ENCODE measurements at regions of chr3 and their contacts with region 1.

Region 1: GRCh38 chr3:185552358-185552877 is at the start of gene LIPH:
- DNase-seq: no peak
- ATAC-seq: peak; percentile 70
- H3K4me3 ChIP-seq: peak within 1 kb of the TSS in 2 of 3 experiments; percentile 4 to 26; a peak in 3 of 6 replicates
- H3K27ac ChIP-seq: no peak within 1 kb of the TSS
- H3K4me1 ChIP-seq: peaks cover 31% of the 10 kb centered on the region
- H3K27me3 ChIP-seq: no peaks in the 10 kb centered on the region; a peak in 1 of 5 replicates
- CTCF ChIP-seq: no peak
- EP300 ChIP-seq: no peak
- POLR2A ChIP-seq: no peak
- RAD21 ChIP-seq: no peak
- total RNA-seq, gene LIPH: 0.09 TPM in 1 of 2 replicates, not detected in the other

Region 2: DNA sequence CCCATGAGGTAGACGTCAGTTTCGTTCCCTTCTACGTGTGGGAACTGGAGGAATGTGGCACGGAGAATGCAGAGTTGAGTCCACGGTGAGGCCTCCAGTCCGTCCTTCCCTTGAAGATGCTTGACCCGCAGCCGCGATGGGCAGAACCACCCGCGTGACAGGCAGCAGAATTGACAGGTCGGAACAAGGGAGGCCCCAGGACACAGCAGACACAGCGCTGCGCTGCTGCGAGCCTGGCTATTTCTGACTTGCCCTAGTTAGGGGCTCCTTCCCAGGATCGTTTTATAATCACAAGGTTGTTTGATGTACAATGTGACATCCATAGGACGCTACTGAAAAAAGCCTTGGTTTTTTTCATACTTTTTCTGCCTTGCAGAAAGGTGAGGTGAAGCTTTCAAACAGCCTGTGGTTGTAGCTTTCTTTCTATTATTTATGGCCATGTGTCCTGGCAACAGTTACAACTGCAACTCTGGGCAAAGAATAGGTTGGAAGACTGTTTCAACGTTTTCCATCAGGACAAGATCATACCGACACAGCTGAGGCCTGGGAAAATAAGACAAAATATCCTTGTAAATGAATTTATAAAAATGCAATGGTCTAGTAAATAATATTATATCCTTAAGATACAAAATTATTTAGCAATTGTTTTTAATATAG is 44.0 kb before region 1 on chr3:
- CTCF ChIA-PET with region 1: no interaction called
- POLR2A ChIA-PET with region 1: no interaction called
- in situ Hi-C with region 1: no loop called
- intact Hi-C with region 1: loop called (anchors 10 kb)
- DNase-seq: no peak
- ATAC-seq: peak; percentile 27; the same call in 2 of the 3 replicates
- H3K4me3 ChIP-seq: no peak overlapping the region
- H3K27ac ChIP-seq: no peak overlapping the region
- H3K4me1 ChIP-seq: peaks cover 6% of the 10 kb centered on the region
- H3K27me3 ChIP-seq: no peaks in the 10 kb centered on the region; a peak in 1 of 5 replicates
- CTCF ChIP-seq: no peak
- EP300 ChIP-seq: no peak
- POLR2A ChIP-seq: no peak
- RAD21 ChIP-seq: no peak

Region 3: GRCh38 chr3:185717121-185717520 is 164.7 kb after region 1 on chr3:
- CTCF ChIA-PET with region 1: no interaction called
- POLR2A ChIA-PET with region 1: no interaction called
- in situ Hi-C with region 1: no loop called
- intact Hi-C with region 1: no loop called
- DNase-seq: no peak
- ATAC-seq: peak; percentile 10; the same call in 2 of the 3 replicates
- H3K4me3 ChIP-seq: no peak overlapping the region
- H3K27ac ChIP-seq: peak overlapping the region; percentile 47
- H3K4me1 ChIP-seq: peaks cover 79% of the 10 kb centered on the region
- H3K27me3 ChIP-seq: no peaks in the 10 kb centered on the region
- CTCF ChIP-seq: no peak
- EP300 ChIP-seq: no peak
- POLR2A ChIP-seq: no peak
- RAD21 ChIP-seq: no peak

Measured in HepG2 (cell line).